K562 (cell line): ENCODE measurements at regions of chr17 and their contacts with region 1.

Region 1: DNA sequence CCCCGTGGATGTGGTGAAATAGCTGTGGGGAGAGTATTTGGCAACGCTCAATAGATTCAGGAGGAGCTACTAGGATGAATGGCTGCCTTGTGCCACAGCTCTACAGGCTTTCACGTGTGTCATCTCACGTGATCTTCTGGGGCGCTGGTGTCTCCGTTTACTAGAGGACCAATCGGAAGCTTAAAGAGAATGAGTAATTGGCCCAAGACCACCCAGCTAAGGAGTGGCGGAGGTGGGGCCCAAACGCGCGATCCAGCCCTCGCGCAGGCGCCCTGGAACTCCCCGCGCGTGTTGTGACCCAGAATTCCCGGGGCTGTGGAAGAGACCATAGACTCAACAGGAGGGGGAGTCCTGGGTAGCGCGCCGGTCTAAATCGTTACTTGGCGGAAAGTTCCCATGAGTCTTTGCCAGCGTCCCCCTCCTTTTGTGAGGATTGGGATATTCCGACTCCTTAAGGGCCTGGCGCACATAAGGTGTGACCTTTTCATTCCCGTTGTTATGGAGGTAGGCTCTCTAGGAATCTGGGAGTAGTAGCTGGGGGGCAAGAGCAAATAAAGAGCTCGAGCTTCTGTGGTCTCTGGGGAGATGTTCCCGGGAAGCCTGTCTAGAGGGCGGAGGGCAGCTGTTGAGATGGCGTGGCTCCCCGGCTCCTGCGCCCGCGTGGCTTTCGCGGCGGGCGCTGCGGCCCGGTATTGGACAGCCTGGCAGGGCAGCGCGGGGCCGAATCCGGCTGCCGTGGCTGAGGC is 23.4 kb downstream of the TRPV2 start:
- DNase-seq: peak; percentile 92 to 98 (median 94)
- ATAC-seq: peak; percentile 88
- H3K4me3 ChIP-seq: peak overlapping the region; percentile 99
- H3K27ac ChIP-seq: peak overlapping the region; percentile 98
- H3K4me1 ChIP-seq: peaks cover 26 to 31% of the 10 kb centered on the region in 2 experiments
- H3K27me3 ChIP-seq: no peaks in the 10 kb centered on the region
- CTCF ChIP-seq: no peak
- EP300 ChIP-seq: peak; percentile 46
- POLR2A ChIP-seq: peak; percentile 99
- RAD21 ChIP-seq: no peak

Region 2: GRCh38 chr17:16415031-16415924 is 23.5 kb before region 1 on chr17 and contains the start of gene TRPV2:
- CTCF ChIA-PET with region 1: no interaction called
- POLR2A ChIA-PET with region 1: interaction called, 19 read pairs
- in situ Hi-C with region 1: no loop called
- intact Hi-C with region 1: no loop called
- DNase-seq: peak; percentile 69 to 76 (median 73)
- ATAC-seq: peak; percentile 83
- H3K4me3 ChIP-seq: peak within 1 kb of the TSS; percentile 80
- H3K27ac ChIP-seq: peak within 1 kb of the TSS; percentile 88
- H3K4me1 ChIP-seq: peaks cover 37 to 39% of the 10 kb centered on the region in 2 experiments
- H3K27me3 ChIP-seq: no peaks in the 10 kb centered on the region
- CTCF ChIP-seq: peak; percentile 78 to 88 (median 83)
- EP300 ChIP-seq: no peak
- POLR2A ChIP-seq: peak; percentile 82
- RAD21 ChIP-seq: peak; percentile 61 to 70; a peak in 3 of 4 replicates
- polyA plus RNA-seq, gene TRPV2: 10.0 to 15.6 TPM

Region 3: GRCh38 chr17:16428098-16428882 is 10.4 kb before region 1 on chr17:
- CTCF ChIA-PET with region 1: no interaction called
- POLR2A ChIA-PET with region 1: interaction called, 26 read pairs
- in situ Hi-C with region 1: no loop called
- intact Hi-C with region 1: no loop called
- DNase-seq: peak; percentile 66 to 74 (median 69)
- ATAC-seq: peak; percentile 95
- H3K4me3 ChIP-seq: no peak overlapping the region
- H3K27ac ChIP-seq: peak overlapping the region; percentile 23; the same call in 2 of the 3 replicates
- H3K4me1 ChIP-seq: peaks cover 3 to 6% of the 10 kb centered on the region in 2 experiments; a peak in 3 of 5 replicates
- H3K27me3 ChIP-seq: no peaks in the 10 kb centered on the region
- CTCF ChIP-seq: peak; percentile 68 to 77 (median 76)
- EP300 ChIP-seq: no peak
- POLR2A ChIP-seq: no peak
- RAD21 ChIP-seq: peak; percentile 14 to 35; a peak in 2 of 4 replicates